Dorsolateral prefrontal cortex (tissue), 120 donors: ENCODE measurements at regions of chr10 and their contacts with region 1.

Region 1: GRCh38 chr10:96395931-96396877 is 37.4 kb upstream of the OPALIN start:
- DNase-seq: peak; percentile 66 to 85 (median 74)
- H3K4me3 ChIP-seq: peak overlapping the region in 7 of 59 donors; percentile 3 to 45 (median 17)
- H3K27ac ChIP-seq: no peak overlapping the region
- H3K27me3 ChIP-seq: peaks cover 0 to 9% (median 0%) of the 10 kb centered on the region in 45 donors
- CTCF ChIP-seq: peak; percentile 71 to 97 (median 94)

Region 2: GRCh38 chr10:96416643-96417042 is 20.4 kb after region 1 on chr10:
- intact Hi-C with region 1: loop called in 1 of 2 experiments (anchors 2 kb)
- DNase-seq: peak in 1 of 10 donors; percentile 40
- H3K4me3 ChIP-seq: peak overlapping the region in 2 of 59 donors; percentile 2 to 4
- H3K27ac ChIP-seq: peak overlapping the region in 57 of 59 donors; percentile 30 to 91 (median 80)
- H3K27me3 ChIP-seq: peaks cover 0 to 6% (median 0%) of the 10 kb centered on the region in 45 donors
- CTCF ChIP-seq: no peak

Region 3: DNA sequence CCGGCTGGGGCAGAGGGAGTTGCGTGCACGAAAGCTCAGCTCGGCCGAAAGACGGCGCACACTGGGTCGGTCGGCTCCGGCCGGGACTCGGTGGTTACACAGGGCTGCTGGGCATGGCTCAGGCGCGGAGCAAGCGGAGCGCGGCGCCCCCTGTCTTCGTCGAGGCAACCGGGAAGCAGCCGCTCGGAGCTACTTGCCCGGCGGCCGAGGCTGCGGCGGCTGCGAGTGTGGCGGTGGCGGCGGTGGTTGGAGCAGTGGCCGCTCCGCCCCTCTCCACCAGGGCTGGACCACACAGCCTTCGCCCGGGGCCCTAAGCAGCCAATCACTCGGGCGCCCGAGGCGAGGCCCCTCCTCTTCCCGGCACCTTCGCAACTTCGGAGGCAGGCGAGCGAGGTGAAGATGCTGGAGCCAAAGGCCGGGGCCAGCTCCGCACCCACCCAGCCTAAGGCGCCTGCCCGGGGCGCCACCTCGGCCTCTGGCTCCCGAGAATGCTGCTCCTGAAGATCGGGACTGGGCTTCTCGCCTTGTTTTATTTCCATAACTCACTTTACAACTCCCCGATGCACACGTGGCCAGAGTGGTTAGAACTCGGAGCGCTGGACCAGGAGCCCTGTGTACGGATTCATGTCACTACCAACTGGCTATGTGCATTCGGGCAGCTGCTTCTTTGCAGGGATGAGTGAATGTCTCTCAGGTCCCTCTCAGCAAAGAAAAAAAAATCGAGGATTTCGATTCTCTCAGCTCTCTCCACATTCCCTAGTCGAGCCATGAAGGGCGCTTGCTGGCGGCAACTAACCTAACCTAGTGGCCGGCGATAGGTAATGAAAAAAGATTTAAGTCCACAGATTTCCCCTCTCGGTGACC is 117.7 kb after region 1 on chr10 and contains the start of gene TLL2:
- intact Hi-C with region 1: loop called (anchors 1 to 2 kb)
- DNase-seq: peak; percentile 81 to 93 (median 88)
- H3K4me3 ChIP-seq: peak within 1 kb of the TSS; percentile 39 to 83 (median 68)
- H3K27ac ChIP-seq: peak within 1 kb of the TSS in 26 of 59 donors; percentile 11 to 81 (median 48)
- H3K27me3 ChIP-seq: no peaks in the 10 kb centered on the region
- CTCF ChIP-seq: peak; percentile 65 to 96 (median 86)
- total RNA-seq, gene TLL2: 1.8 to 14.6 (median 4.2) TPM

Region 4: GRCh38 chr10:96586419-96587263 is 190.4 kb after region 1 on chr10 and contains the start of gene TM9SF3:
- intact Hi-C with region 1: loop called in 1 of 2 experiments (anchors 10 kb)
- DNase-seq: peak; percentile 78 to 94 (median 88)
- H3K4me3 ChIP-seq: peak within 1 kb of the TSS; percentile 62 to 99 (median 92)
- H3K27ac ChIP-seq: peak within 1 kb of the TSS; percentile 55 to 98 (median 94)
- H3K27me3 ChIP-seq: no peaks in the 10 kb centered on the region
- CTCF ChIP-seq: peak in 12 of 56 donors; percentile 4 to 26 (median 12)
- total RNA-seq, gene TM9SF3: 52.7 to 101 (median 73.9) TPM

Region 5: GRCh38 chr10:96831867-96832720 is 435.9 kb after region 1 on chr10 and contains the start of gene LCOR:
- intact Hi-C with region 1: no loop called
- DNase-seq: peak; percentile 48 to 84 (median 65)
- H3K4me3 ChIP-seq: peak within 1 kb of the TSS; percentile 60 to 97 (median 90)
- H3K27ac ChIP-seq: peak within 1 kb of the TSS; percentile 83 to 99 (median 96)
- H3K27me3 ChIP-seq: no peaks in the 10 kb centered on the region
- CTCF ChIP-seq: peak in 12 of 56 donors; percentile 2 to 29 (median 10)
- total RNA-seq, gene LCOR: 32.2 to 74.6 (median 48.4) TPM

Region 6: GRCh38 chr10:97210543-97210961 is 814.3 kb after region 1 on chr10:
- intact Hi-C with region 1: loop called in 1 of 2 experiments (anchors 5 kb)
- DNase-seq: peak in 8 of 10 donors; percentile 40 to 83 (median 73)
- H3K4me3 ChIP-seq: no peak overlapping the region
- H3K27ac ChIP-seq: no peak overlapping the region
- H3K27me3 ChIP-seq: no peaks in the 10 kb centered on the region
- CTCF ChIP-seq: peak in 55 of 56 donors; percentile 85 to 100 (median 98)